Naive thymus-derived CD4-positive, alpha-beta T cell (primary cell): ENCODE measurements at regions of chr17 and their contacts with region 1.

Region 1: GRCh38 chr17:14553855-14554254 is 253.0 kb downstream of the HS3ST3B1 start:
- DNase-seq: no peak
- ATAC-seq: no peak
- H3K4me3 ChIP-seq: no peak overlapping the region
- H3K4me3 Mint-ChIP-seq: no peak overlapping the region
- H3K27ac ChIP-seq: no peak overlapping the region
- H3K27ac Mint-ChIP-seq: peak overlapping the region in 1 of 9 donors; percentile 14
- H3K4me1 ChIP-seq: no peaks in the 10 kb centered on the region
- H3K4me1 Mint-ChIP-seq: peaks cover 0 to 13% (median 6%) of the 10 kb centered on the region in 7 donors
- H3K27me3 ChIP-seq: no peaks in the 10 kb centered on the region
- H3K27me3 Mint-ChIP-seq: peaks cover 0 to 1% (median 0%) of the 10 kb centered on the region in 5 donors

Region 2: DNA sequence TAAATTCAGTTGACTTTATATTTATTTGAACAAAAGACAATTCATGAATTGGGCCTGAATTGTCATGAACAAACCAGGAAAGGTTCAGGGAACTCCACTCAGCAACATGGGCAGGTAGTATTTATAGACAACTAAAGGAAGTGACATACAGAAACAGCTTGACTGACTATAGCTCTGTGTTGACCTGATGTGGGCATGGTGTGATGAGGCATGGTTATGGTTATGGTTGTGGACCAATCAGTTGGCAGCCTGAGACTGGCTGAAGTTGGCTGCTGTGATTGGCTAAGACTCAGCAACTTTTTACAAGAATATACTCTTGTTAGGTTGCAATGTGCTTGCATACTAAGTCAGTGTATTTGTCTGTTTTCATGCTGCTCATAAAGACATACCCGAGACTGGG is 144.6 kb before region 1 on chr17:
- CTCF ChIA-PET with region 1: no interaction called
- POLR2A ChIA-PET with region 1: no interaction called
- intact Hi-C with region 1: loop called in 1 of 2 experiments (anchors 10 kb)
- DNase-seq: no peak
- ATAC-seq: no peak
- H3K4me3 ChIP-seq: no peak overlapping the region
- H3K4me3 Mint-ChIP-seq: no peak overlapping the region
- H3K27ac ChIP-seq: no peak overlapping the region
- H3K27ac Mint-ChIP-seq: no peak overlapping the region
- H3K4me1 ChIP-seq: peaks cover 8% of the 10 kb centered on the region in 2 donors
- H3K4me1 Mint-ChIP-seq: peaks cover 11 to 37% (median 18%) of the 10 kb centered on the region in 7 donors
- H3K27me3 ChIP-seq: no peaks in the 10 kb centered on the region
- H3K27me3 Mint-ChIP-seq: no peaks in the 10 kb centered on the region

Region 3: DNA sequence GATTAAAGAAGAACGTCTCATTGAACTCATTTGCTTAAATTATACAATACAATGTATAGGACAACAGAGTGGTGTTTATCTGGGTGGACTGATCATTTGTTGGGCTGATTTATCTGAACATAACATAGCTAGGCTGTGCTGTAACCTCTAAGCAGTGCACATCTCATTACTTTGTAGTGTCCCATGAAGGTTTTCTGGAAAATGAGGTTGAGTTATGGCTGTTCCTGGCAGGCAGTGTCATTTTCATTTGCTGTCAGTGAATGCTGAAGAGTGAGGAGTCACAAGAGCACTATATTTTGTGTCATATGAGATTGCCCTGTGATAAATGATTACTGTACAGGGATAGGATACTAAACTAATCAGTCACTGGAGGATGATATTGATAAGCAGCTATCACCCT is 87.3 kb after region 1 on chr17:
- CTCF ChIA-PET with region 1: no interaction called
- POLR2A ChIA-PET with region 1: no interaction called
- intact Hi-C with region 1: no loop called
- DNase-seq: no peak
- ATAC-seq: no peak
- H3K4me3 ChIP-seq: no peak overlapping the region
- H3K4me3 Mint-ChIP-seq: no peak overlapping the region
- H3K27ac ChIP-seq: no peak overlapping the region
- H3K27ac Mint-ChIP-seq: no peak overlapping the region
- H3K4me1 ChIP-seq: no peaks in the 10 kb centered on the region
- H3K4me1 Mint-ChIP-seq: no peaks in the 10 kb centered on the region
- H3K27me3 ChIP-seq: no peaks in the 10 kb centered on the region
- H3K27me3 Mint-ChIP-seq: peaks cover 0 to 5% (median 0%) of the 10 kb centered on the region in 5 donors

Region 4: GRCh38 chr17:15247891-15248529 is 694.2 kb after region 1 on chr17:
- CTCF ChIA-PET with region 1: no interaction called
- POLR2A ChIA-PET with region 1: no interaction called
- intact Hi-C with region 1: no loop called
- DNase-seq: no peak
- ATAC-seq: no peak
- H3K4me3 ChIP-seq: no peak overlapping the region
- H3K4me3 Mint-ChIP-seq: no peak overlapping the region
- H3K27ac ChIP-seq: no peak overlapping the region
- H3K27ac Mint-ChIP-seq: no peak overlapping the region
- H3K4me1 ChIP-seq: no peaks in the 10 kb centered on the region
- H3K4me1 Mint-ChIP-seq: peaks cover 0 to 3% (median 0%) of the 10 kb centered on the region in 7 donors
- H3K27me3 ChIP-seq: no peaks in the 10 kb centered on the region
- H3K27me3 Mint-ChIP-seq: peaks cover 0 to 14% (median 7%) of the 10 kb centered on the region in 5 donors